Activated T-helper 1 cell treated with anti-CD3 and anti-CD28 coated beads, Interleukin-12 subunit alpha, Interleukin-12 subunit beta, Interleukin-2, Interleukin-4 antibody, amounts not matched to agents 30 ng/mL and 10 ng/mL and 1 ng/mL, durations not matched to agents 14 hours and 24 hours and 36 hours (primary cell): ENCODE measurements at regions of chr3 and their contacts with region 1.

Region 1: DNA sequence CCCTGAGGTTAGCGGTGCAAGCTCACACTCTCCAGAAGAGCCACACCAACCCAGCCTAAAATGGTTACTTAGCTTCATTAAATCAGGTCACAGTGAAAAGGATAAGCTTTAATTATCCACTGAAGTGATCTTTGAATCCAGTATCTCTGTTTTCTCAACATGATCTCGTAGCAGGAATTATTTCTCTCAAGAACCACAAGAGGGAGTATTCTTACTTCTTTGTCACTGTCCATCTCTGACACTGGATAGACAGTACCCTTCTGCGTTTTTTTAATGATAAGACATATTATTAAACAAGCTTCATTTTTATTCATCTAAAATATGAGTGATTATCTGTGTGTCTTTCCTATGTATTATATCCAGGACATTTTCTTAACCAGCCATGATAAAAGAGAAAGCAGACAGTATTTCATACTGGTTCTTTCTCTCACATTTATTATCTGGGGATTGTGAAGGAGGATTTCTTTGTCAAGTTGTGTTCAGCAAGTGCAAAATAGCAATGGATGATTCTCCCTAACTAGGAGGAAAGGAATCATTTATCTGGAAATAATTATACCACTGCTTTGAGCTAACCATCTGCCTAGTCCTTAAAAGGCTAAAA is 105.4 kb upstream of the CCDC54 start:
- DNase-seq: no peak
- H3K4me3 Mint-ChIP-seq: no peak overlapping the region
- H3K27ac Mint-ChIP-seq: no peak overlapping the region
- H3K4me1 Mint-ChIP-seq: no peaks in the 10 kb centered on the region
- H3K27me3 Mint-ChIP-seq: peaks cover 15% of the 10 kb centered on the region

Region 2: DNA sequence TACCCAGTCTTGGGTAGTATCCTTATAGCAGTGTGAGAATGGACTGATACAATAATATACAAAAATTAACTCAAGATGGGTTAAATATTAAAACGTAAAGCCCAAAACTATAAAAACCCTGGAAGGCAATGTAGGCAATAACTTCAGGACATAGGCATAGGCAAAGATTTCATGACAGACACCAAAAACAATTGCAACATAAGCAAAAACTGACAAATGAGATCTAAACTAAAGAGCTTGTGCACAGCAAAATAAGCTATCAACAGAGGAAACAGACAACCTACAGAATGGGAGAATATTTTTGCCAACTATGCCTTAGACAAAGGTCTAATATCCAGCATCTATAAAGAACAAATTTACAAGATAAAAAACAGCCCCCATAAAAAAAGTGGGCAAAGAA is 99.5 kb before region 1 on chr3:
- intact Hi-C with region 1: no loop called
- DNase-seq: no peak
- H3K4me3 Mint-ChIP-seq: no peak overlapping the region
- H3K27ac Mint-ChIP-seq: no peak overlapping the region
- H3K4me1 Mint-ChIP-seq: no peaks in the 10 kb centered on the region
- H3K27me3 Mint-ChIP-seq: peaks cover 1% of the 10 kb centered on the region

Region 3: DNA sequence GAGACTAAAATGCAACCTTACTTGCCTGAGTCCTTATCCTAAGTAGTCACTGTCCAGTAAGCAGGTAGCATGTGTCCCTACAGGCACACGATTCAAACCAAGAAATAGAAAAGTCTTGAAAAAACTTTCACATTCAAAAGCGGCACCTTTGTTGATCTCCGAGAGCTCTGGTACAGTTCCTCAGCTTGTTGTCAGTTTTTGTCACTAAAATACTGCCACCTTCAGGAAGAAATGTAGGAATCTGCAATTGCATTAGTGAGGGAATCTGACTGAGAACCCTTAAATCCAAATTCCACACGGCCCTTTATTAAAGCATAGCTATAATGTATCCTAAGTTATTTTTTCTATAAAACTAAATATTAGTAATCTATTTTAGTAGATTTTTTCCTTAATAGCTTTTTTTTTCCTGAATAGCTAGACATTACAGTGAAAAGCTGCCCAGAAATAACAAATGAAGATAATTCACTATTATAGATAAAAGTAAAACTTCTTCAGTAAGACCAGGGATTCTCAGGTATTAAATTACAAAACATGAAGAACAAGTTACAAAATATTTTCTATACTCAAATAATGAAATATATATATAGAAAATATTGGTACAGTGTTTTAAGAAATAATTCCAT is 149.4 kb after region 1 on chr3:
- intact Hi-C with region 1: loop called (anchors 1 kb)
- DNase-seq: no peak
- H3K4me3 Mint-ChIP-seq: no peak overlapping the region
- H3K27ac Mint-ChIP-seq: no peak overlapping the region
- H3K4me1 Mint-ChIP-seq: peaks cover 5% of the 10 kb centered on the region
- H3K27me3 Mint-ChIP-seq: peaks cover 37% of the 10 kb centered on the region

Region 4: DNA sequence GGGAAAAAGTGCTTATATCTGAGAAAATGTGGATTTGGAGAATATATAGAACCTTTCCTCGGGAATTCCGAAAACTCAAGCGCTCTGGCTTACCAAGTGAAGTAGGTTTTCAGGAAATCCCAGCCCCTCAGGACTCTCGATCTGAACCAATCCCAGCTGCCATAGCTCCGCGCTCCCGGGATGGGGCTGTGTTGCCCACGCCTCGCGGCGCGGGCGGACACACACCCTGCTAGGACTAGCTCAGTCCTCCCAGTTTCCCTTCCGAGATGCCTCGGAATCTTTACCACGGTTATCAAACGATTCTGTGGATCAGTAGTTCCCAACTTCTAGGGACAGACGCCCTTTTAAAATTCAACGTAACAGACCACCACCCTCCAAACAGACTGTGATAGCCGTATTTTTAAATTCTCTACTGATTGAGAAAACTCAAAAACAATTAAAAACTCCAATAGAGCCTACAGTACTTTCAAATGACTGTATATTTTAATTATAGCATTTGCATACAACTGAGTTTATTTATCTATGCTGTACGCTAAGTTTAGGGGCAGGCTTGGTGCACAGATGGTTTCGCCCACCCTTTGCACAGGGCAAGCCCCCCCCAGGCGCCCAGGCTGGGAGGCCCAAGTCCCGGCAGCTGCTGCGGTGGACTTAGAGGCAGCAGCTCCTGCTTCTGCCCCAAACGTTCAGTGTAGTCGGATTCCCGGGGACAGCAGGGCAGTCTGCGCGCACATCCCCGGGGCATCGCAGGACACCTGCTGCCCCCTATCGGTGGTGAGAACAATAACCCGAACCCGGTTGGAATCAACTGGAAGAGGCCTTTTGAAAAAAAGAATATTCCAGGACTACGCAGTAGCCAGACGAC is 157.7 kb after region 1 on chr3:
- intact Hi-C with region 1: loop called (anchors 2 kb)
- DNase-seq: peak; percentile 44
- H3K4me3 Mint-ChIP-seq: peak overlapping the region; percentile 82
- H3K27ac Mint-ChIP-seq: peak overlapping the region; percentile 44
- H3K4me1 Mint-ChIP-seq: peaks cover 21% of the 10 kb centered on the region
- H3K27me3 Mint-ChIP-seq: peaks cover 45% of the 10 kb centered on the region

Region 5: DNA sequence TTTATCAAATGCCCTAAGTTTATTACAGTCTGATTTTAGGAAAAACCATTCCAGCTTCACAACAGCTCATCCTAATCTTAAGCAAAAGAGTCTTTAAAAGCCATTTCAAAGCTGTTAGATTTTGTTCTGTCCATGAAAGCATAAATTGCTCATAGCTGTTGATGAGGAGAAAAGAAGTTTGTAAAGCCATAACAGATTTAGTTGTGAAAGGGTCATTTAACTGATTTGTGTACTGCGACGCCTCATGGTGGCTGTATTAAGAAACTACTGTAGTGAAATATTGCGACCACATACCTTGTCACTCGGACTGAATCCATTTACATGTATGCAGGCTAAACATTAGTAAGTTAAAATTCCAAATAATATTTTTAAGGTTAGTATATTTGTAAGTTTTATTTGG is 271.8 kb after region 1 on chr3:
- intact Hi-C with region 1: loop called (anchors 1 kb)
- DNase-seq: no peak
- H3K4me3 Mint-ChIP-seq: no peak overlapping the region
- H3K27ac Mint-ChIP-seq: no peak overlapping the region
- H3K4me1 Mint-ChIP-seq: no peaks in the 10 kb centered on the region
- H3K27me3 Mint-ChIP-seq: no peaks in the 10 kb centered on the region

Region 6: DNA sequence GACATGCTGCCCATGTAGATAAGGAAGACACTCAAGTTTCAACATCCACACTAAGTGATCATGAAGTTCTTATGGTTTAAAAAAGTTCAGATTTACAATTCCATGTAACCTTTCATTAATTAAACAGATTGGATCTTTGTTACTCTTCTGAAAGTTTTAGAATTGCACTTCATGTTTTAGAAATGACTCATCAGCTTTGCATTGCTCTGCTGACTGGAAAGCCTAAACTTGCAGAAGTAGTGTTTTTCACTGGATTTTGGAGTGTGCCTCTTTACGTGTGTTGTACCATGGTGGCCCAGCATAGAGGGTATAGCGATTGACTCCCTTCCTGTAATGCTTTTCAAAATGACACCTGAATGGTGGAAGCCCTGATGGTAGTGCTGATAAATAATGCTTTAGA is 408.8 kb after region 1 on chr3:
- intact Hi-C with region 1: no loop called
- DNase-seq: no peak
- H3K4me3 Mint-ChIP-seq: no peak overlapping the region
- H3K27ac Mint-ChIP-seq: no peak overlapping the region
- H3K4me1 Mint-ChIP-seq: peaks cover 27% of the 10 kb centered on the region
- H3K27me3 Mint-ChIP-seq: no peaks in the 10 kb centered on the region